Activated naive CD4-positive, alpha-beta T cell treated with anti-CD3 and anti-CD28 coated beads, Interleukin-2, amount 10 ng/mL, durations not matched to agents 7 days and 5 days (primary cell): ENCODE measurements at regions of chr17 and their contacts with region 1.

Region 1: DNA sequence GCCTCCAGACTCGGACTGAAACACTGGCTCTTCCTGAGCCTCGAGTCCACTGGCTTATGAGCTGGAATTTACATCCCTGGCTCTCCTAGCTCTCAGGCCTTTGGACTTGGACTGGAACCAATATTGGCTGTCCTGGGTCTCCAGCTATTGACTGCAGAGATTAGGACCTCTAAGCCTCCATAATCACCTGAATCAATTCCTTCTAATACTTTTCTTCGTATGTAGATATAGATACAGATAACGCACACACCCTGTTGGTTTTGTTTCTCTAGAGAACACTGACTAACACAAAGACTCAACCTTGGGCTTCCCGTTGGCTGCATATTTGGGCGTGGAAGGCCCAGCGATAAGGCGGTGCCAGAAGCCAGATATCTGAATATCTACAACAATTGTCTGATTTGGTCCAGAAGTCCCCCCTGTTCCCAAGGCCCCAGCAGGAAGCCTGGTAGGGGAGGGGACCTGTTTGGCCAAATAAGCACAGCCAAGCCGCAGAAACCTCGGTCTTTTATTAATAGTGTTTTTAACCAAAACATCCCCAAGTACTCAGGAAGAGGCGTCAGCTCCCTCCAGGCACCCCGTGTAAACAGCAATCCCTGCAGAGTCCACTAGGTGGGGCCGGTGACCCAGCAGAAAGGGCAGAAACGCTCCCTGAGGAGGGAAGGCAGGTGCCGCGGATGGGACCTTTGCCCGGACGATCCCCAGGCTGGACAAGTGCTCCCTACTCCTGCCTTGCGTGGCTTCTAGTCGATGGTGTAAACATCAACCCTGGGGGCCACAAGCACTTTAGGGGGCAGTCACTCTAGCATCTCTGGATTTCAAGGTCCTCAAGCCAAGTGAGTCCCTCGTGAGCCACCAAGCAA is 57.0 kb downstream of the ABR start:
- DNase-seq: peak; percentile 88
- H3K4me3 Mint-ChIP-seq: no peak overlapping the region
- H3K27ac Mint-ChIP-seq: no peak overlapping the region
- H3K4me1 Mint-ChIP-seq: peaks cover 10% of the 10 kb centered on the region
- H3K27me3 Mint-ChIP-seq: peaks cover 41% of the 10 kb centered on the region

Region 2: GRCh38 chr17:1047177-1047878 is 75.4 kb before region 1 on chr17:
- CTCF ChIA-PET with region 1: no interaction called
- DNase-seq: no peak
- H3K4me3 Mint-ChIP-seq: no peak overlapping the region
- H3K27ac Mint-ChIP-seq: no peak overlapping the region
- H3K4me1 Mint-ChIP-seq: no peaks in the 10 kb centered on the region
- H3K27me3 Mint-ChIP-seq: no peaks in the 10 kb centered on the region

Region 3: DNA sequence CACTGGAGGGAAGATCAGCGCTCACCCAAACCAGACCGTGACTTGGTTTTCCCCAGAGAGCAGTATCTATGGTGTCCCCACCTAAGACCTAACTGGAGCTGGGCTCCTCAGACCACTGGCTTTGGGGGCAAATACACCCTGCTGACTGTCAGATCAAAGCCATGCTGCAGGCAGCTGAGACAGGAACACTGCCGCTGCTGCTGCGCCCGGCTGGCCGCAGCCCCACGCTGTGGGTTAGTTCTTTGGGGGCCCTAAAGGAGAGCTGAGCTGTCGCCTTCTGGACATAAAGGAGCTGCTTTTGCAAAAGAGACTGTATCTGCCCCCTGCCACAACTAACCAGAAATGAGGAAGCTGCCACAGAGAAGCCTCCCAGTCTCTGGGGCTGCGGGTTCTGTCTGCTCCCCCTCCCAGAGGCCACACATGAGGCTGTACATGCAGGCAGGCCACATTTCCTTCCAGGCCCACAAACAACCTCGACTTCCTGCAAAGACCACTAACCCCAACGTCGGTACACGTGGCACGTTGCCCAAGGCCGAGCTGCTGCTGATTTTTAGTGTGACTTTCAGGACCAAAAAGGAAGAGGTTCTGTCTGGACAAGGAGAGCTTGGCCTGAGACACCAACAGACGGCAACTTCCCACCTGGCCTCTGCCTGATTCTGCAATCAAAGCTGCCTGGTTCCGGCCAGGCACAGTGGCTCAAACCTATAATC is 75.2 kb after region 1 on chr17:
- CTCF ChIA-PET with region 1: interaction called, 15 read pairs
- DNase-seq: peak; percentile 80
- H3K4me3 Mint-ChIP-seq: peak overlapping the region; percentile 35
- H3K27ac Mint-ChIP-seq: peak overlapping the region; percentile 87
- H3K4me1 Mint-ChIP-seq: peaks cover 61% of the 10 kb centered on the region
- H3K27me3 Mint-ChIP-seq: peaks cover 18% of the 10 kb centered on the region